ENCODE measurements at regions of chr14 and their contacts with region 1.

Region 1: GRCh38 chr14:51651388-51652167 is at the start of gene FRMD6:
- DNase-seq: peak; percentile 75 to 90 (median 83)
- ATAC-seq: peak; percentile 90
- H3K4me3 ChIP-seq: peak within 1 kb of the TSS; percentile 76
- H3K4me3 Mint-ChIP-seq: peak within 1 kb of the TSS; percentile 77 to 89 (median 84)
- H3K27ac ChIP-seq: peak within 1 kb of the TSS; percentile 78
- H3K27ac Mint-ChIP-seq: peak within 1 kb of the TSS in 8 of 9 donors; percentile 20 to 83 (median 73)
- H3K4me1 ChIP-seq: peaks cover 6 to 18% of the 10 kb centered on the region in 2 donors
- H3K4me1 Mint-ChIP-seq: peaks cover 12 to 29% (median 18%) of the 10 kb centered on the region in 7 donors
- H3K27me3 ChIP-seq: peaks cover 0 to 12% of the 10 kb centered on the region in 2 donors
- H3K27me3 Mint-ChIP-seq: peaks cover 9 to 31% (median 19%) of the 10 kb centered on the region in 5 donors
- total RNA-seq, gene FRMD6: 0.93 to 4.8 (median 3.9) TPM

Region 2: DNA sequence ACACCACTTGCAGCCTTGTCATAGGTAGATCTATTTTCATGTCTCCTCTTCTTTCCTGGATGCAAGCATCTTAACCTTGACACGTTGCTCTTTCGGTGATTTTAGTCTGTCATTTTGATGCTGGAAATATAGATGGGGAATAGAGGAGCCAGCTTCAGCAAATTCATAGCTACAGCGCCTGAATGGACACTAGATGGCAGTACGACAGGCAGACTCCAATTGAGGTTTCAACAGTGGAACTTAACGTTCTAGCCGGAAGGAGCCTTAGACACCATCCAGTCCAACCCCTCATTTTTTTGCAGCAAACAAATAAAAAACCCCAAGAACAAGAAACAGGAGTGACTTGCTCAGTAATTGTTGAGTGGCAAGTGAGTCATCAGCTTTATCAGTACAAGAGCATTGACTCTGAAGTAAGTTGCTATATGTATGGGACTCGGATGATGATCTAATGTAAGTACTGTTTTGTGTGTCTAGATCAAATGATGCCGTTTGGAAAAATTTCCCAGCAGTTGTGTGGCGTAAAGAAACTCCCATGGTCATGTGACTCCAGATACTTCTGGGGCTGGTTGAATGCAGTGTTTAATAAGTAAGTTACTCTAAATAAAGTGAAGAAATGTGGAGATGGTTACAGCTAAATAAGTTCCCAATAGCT is 1330.4 kb before region 1 on chr14:
- CTCF ChIA-PET with region 1: no interaction called
- POLR2A ChIA-PET with region 1: no interaction called
- intact Hi-C with region 1: loop called in 1 of 2 experiments (anchors 5 kb)
- DNase-seq: peak in 8 of 9 donors; percentile 52 to 83 (median 76)
- ATAC-seq: peak; percentile 99
- H3K4me3 ChIP-seq: peak overlapping the region; percentile 15
- H3K4me3 Mint-ChIP-seq: no peak overlapping the region
- H3K27ac ChIP-seq: peak overlapping the region; percentile 11
- H3K27ac Mint-ChIP-seq: no peak overlapping the region
- H3K4me1 ChIP-seq: peaks cover 0 to 4% of the 10 kb centered on the region in 2 donors
- H3K4me1 Mint-ChIP-seq: peaks cover 8 to 34% (median 27%) of the 10 kb centered on the region in 7 donors
- H3K27me3 ChIP-seq: no peaks in the 10 kb centered on the region
- H3K27me3 Mint-ChIP-seq: no peaks in the 10 kb centered on the region

Region 3: DNA sequence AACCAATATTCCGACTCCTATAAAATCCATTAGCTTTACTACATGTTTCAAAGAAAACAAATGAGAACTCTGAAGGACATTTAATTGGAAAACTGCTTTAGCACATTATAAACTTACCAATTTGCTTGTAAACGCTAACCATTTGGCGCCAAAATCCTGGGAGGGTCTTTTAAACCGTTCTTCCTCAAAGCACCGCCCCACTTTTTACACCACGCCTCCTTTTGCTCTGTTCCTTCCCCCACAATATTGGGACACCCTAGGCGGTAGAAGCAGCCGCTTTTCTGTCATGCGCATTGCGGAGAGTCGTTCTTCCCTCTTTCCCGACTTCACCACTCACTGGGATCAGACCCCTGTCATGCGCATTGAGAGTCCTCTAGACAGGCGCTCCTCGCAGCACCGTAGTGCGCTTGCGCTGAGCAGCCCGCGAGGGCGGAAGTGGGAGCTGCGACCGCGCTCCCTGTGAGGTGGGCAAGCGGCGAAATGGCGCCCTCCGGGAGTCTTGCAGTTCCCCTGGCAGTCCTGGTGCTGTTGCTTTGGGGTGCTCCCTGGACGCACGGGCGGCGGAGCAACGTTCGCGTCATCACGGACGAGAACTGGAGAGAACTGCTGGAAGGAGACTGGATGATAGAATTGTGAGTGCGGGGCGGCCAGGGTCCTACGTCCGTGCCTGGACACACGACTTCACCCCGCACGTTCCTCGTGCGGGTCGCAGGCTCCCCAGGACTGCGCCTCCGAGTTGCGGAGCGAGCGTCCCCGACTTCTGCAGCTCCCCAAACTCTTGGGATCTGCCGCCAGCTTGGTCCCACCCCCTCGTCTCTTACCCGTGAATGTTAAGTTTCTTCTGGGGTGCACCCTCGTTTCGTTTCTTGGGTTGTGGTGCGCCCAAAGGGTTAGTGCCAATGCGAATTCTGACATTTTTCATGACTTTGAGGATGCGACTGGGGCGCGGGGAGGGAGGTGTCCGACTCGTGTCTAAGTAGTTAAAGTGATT is 411.5 kb before region 1 on chr14 and contains the start of gene TMX1:
- CTCF ChIA-PET with region 1: no interaction called
- POLR2A ChIA-PET with region 1: interaction called, 3 read pairs
- intact Hi-C with region 1: loop called (anchors 1 kb)
- DNase-seq: peak; percentile 70 to 88 (median 82)
- ATAC-seq: peak; percentile 94
- H3K4me3 ChIP-seq: peak within 1 kb of the TSS; percentile 99
- H3K4me3 Mint-ChIP-seq: no peak within 1 kb of the TSS
- H3K27ac ChIP-seq: peak within 1 kb of the TSS; percentile 81
- H3K27ac Mint-ChIP-seq: no peak within 1 kb of the TSS
- H3K4me1 ChIP-seq: peaks cover 16 to 17% of the 10 kb centered on the region in 2 donors
- H3K4me1 Mint-ChIP-seq: peaks cover 0 to 29% (median 20%) of the 10 kb centered on the region in 7 donors
- H3K27me3 ChIP-seq: no peaks in the 10 kb centered on the region
- H3K27me3 Mint-ChIP-seq: no peaks in the 10 kb centered on the region
- total RNA-seq, gene TMX1: 13.3 to 48.3 (median 23.1) TPM

Region 4: GRCh38 chr14:51419685-51420084 is 231.9 kb before region 1 on chr14:
- CTCF ChIA-PET with region 1: no interaction called
- POLR2A ChIA-PET with region 1: no interaction called
- intact Hi-C with region 1: loop called in 1 of 2 experiments (anchors 5 kb)
- DNase-seq: peak in 8 of 9 donors; percentile 12 to 90 (median 82)
- ATAC-seq: peak; percentile 95
- H3K4me3 ChIP-seq: no peak overlapping the region
- H3K4me3 Mint-ChIP-seq: peak overlapping the region in 9 of 10 donors; percentile 26 to 70 (median 59)
- H3K27ac ChIP-seq: peak overlapping the region; percentile 41
- H3K27ac Mint-ChIP-seq: peak overlapping the region; percentile 80 to 97 (median 91)
- H3K4me1 ChIP-seq: peaks cover 17 to 19% of the 10 kb centered on the region in 2 donors
- H3K4me1 Mint-ChIP-seq: peaks cover 10 to 33% (median 24%) of the 10 kb centered on the region in 7 donors
- H3K27me3 ChIP-seq: no peaks in the 10 kb centered on the region
- H3K27me3 Mint-ChIP-seq: peaks cover 0 to 26% (median 22%) of the 10 kb centered on the region in 5 donors

Region 5: GRCh38 chr14:51597261-51598001 is 54.1 kb before region 1 on chr14:
- CTCF ChIA-PET with region 1: no interaction called
- POLR2A ChIA-PET with region 1: no interaction called
- intact Hi-C with region 1: no loop called
- DNase-seq: no peak
- ATAC-seq: no peak
- H3K4me3 ChIP-seq: no peak overlapping the region
- H3K4me3 Mint-ChIP-seq: no peak overlapping the region
- H3K27ac ChIP-seq: no peak overlapping the region
- H3K27ac Mint-ChIP-seq: no peak overlapping the region
- H3K4me1 ChIP-seq: peaks cover 0 to 5% of the 10 kb centered on the region in 2 donors
- H3K4me1 Mint-ChIP-seq: peaks cover 0 to 8% (median 7%) of the 10 kb centered on the region in 7 donors
- H3K27me3 ChIP-seq: no peaks in the 10 kb centered on the region
- H3K27me3 Mint-ChIP-seq: peaks cover 10 to 47% (median 20%) of the 10 kb centered on the region in 5 donors

Region 6: GRCh38 chr14:51609955-51610283 is 41.7 kb before region 1 on chr14:
- CTCF ChIA-PET with region 1: no interaction called
- POLR2A ChIA-PET with region 1: no interaction called
- intact Hi-C with region 1: no loop called
- DNase-seq: no peak
- ATAC-seq: no peak
- H3K4me3 ChIP-seq: no peak overlapping the region
- H3K4me3 Mint-ChIP-seq: no peak overlapping the region
- H3K27ac ChIP-seq: no peak overlapping the region
- H3K27ac Mint-ChIP-seq: no peak overlapping the region
- H3K4me1 ChIP-seq: no peaks in the 10 kb centered on the region
- H3K4me1 Mint-ChIP-seq: no peaks in the 10 kb centered on the region
- H3K27me3 ChIP-seq: no peaks in the 10 kb centered on the region
- H3K27me3 Mint-ChIP-seq: peaks cover 3 to 27% (median 12%) of the 10 kb centered on the region in 5 donors

Region 7: DNA sequence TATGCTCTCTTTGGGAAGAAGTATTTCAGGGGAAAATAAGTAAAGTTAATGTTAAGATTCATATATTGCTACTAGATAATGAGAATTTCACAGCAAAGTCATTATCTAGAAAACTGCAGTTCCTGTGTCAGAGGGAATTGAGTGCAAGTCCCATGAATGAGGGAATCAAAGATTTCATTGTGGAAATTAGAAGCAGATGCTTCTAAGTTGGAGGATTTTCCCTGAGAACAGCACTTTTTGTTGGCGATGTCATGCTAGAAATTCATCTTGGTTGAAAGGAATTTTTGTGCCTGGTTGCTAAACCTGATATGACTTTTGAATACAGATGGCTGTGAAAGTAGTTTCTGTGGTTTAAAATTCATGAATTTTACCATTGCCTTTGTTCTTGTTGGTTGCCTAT is 25.7 kb after region 1 on chr14:
- CTCF ChIA-PET with region 1: no interaction called
- POLR2A ChIA-PET with region 1: no interaction called
- intact Hi-C with region 1: no loop called
- DNase-seq: no peak
- ATAC-seq: no peak
- H3K4me3 ChIP-seq: no peak overlapping the region
- H3K4me3 Mint-ChIP-seq: no peak overlapping the region
- H3K27ac ChIP-seq: no peak overlapping the region
- H3K27ac Mint-ChIP-seq: no peak overlapping the region
- H3K4me1 ChIP-seq: no peaks in the 10 kb centered on the region
- H3K4me1 Mint-ChIP-seq: peaks cover 0 to 5% (median 0%) of the 10 kb centered on the region in 7 donors
- H3K27me3 ChIP-seq: no peaks in the 10 kb centered on the region
- H3K27me3 Mint-ChIP-seq: peaks cover 0 to 6% (median 4%) of the 10 kb centered on the region in 5 donors

Region 8: DNA sequence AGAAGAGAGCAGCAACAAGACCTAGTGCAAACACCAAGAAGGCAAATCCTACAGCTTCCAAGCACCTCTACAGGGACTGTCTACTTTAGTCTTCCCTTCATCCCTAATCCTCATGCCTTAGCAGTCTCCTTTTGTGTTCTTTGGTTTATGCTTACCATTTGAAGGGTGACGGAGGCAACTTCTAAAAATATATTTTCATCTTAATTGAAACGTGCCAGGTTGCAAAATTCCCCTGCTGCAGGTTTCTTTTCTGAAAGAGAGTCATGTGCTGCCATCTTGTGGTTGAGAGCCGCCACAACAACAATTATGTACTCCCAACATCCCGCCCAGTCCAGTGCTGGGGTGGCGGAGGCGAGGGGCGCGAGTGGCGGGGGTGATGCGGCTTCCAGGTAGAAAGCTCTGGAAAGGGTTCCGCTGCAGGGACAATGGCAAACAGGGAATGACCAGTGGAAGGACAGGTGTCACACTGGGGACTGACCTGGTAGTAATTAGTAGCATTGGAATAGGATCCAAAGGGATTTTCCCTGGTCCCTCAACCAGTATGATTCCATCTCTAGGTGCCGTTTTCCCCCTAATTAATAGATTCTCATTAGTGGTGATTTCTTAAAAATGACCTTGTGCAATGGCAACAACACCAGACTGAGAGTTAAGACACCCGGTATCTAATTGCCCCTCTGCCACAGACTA is 128.6 kb after region 1 on chr14:
- CTCF ChIA-PET with region 1: no interaction called
- POLR2A ChIA-PET with region 1: no interaction called
- intact Hi-C with region 1: loop called in 1 of 2 experiments (anchors 1 kb)
- DNase-seq: peak; percentile 34 to 74 (median 64)
- ATAC-seq: peak; percentile 84
- H3K4me3 ChIP-seq: no peak overlapping the region
- H3K4me3 Mint-ChIP-seq: peak overlapping the region; percentile 5 to 76 (median 53)
- H3K27ac ChIP-seq: no peak overlapping the region
- H3K27ac Mint-ChIP-seq: peak overlapping the region in 6 of 9 donors; percentile 35 to 89 (median 46)
- H3K4me1 ChIP-seq: peaks cover 5 to 15% of the 10 kb centered on the region in 2 donors
- H3K4me1 Mint-ChIP-seq: peaks cover 18 to 34% (median 26%) of the 10 kb centered on the region in 7 donors
- H3K27me3 ChIP-seq: no peaks in the 10 kb centered on the region
- H3K27me3 Mint-ChIP-seq: peaks cover 0 to 48% (median 5%) of the 10 kb centered on the region in 5 donors

Region 9: DNA sequence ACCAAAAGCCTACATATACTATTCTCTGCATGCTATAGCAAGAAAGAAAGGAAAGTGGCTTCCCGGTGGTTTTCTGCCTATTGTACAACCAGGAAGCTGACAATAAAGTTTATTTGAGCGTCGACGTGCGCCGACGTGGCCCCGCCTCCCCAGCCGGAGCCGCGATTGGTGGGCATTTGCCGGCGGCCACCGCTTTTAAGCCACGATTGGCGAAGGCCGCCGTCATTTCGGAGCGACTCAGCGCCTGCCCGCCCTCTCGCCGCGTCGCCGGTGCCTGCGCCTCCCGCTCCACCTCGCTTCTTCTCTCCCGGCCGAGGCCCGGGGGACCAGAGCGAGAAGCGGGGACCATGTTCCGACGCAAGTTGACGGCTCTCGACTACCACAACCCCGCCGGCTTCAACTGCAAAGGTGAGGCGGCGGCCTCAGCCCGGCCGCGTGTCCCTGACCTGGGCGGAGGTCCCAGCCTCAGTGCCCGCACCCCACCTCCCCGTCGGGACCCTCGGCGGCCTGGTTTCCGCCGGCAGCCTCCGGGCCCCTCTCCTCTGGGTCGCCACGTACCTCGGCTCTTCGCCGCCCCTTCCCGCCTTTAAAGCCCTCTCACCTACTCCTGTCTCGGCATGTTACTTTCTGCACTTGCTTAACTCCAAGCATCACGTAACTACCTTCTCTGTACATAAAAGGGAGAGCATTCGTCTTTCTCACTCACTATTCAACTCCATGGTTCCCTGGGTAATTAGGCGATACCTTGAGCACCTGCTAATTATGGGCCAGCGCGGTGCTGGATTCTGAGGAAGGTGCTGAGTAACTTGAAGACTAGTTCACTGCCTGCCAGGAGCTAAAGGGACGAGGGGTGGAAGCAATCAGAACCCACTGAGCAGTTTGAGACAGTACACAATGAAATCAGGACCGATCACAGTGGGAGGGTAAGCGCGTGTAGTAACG is 338.0 kb after region 1 on chr14 and contains the start of gene RTRAF:
- CTCF ChIA-PET with region 1: no interaction called
- POLR2A ChIA-PET with region 1: no interaction called
- intact Hi-C with region 1: loop called (anchors 1 to 2 kb)
- DNase-seq: peak; percentile 86 to 93 (median 91)
- ATAC-seq: peak; percentile 98
- H3K4me3 ChIP-seq: peak within 1 kb of the TSS; percentile 60
- H3K4me3 Mint-ChIP-seq: peak within 1 kb of the TSS; percentile 93 to 97 (median 95)
- H3K27ac ChIP-seq: peak within 1 kb of the TSS; percentile 88
- H3K27ac Mint-ChIP-seq: peak within 1 kb of the TSS; percentile 91 to 99 (median 95)
- H3K4me1 ChIP-seq: peaks cover 19 to 22% of the 10 kb centered on the region in 2 donors
- H3K4me1 Mint-ChIP-seq: peaks cover 20 to 57% (median 50%) of the 10 kb centered on the region in 7 donors
- H3K27me3 ChIP-seq: no peaks in the 10 kb centered on the region
- H3K27me3 Mint-ChIP-seq: peaks cover 0 to 4% (median 0%) of the 10 kb centered on the region in 5 donors
- total RNA-seq, gene RTRAF: 112 to 180 (median 116) TPM

Region 10: DNA sequence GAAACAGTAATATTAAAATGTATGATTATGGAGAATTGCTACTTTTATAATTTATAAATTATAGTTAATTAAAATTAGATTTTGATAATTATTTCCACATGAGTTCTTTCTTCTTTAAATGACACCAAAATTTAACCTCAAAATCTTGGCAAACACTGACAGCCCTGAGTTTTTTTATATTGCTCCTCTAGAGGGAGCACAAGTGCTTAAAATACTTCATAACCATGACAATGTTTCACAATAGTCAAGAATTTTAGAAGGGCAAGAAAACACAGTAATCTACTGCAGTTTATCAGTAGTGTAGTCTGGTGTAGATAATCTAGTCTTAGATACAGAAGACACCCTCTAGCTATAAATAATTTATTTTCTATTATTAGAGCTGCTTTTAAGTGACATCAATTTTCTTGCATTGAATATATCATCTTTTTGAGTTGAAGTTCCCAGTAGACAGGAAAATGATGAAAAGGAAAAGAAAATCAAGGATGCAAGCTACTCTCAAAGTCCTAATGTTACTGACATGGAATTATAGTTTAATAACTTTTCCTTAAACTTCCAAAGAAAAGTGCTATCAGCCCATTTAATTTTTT is 648.2 kb after region 1 on chr14:
- CTCF ChIA-PET with region 1: no interaction called
- POLR2A ChIA-PET with region 1: no interaction called
- intact Hi-C with region 1: no loop called
- DNase-seq: peak in 6 of 9 donors; percentile 28 to 68 (median 51)
- ATAC-seq: peak; percentile 84
- H3K4me3 ChIP-seq: no peak overlapping the region
- H3K4me3 Mint-ChIP-seq: peak overlapping the region in 1 of 10 donors; percentile 23
- H3K27ac ChIP-seq: no peak overlapping the region
- H3K27ac Mint-ChIP-seq: no peak overlapping the region
- H3K4me1 ChIP-seq: peaks cover 3 to 5% of the 10 kb centered on the region in 2 donors
- H3K4me1 Mint-ChIP-seq: peaks cover 8 to 63% (median 25%) of the 10 kb centered on the region in 7 donors
- H3K27me3 ChIP-seq: no peaks in the 10 kb centered on the region
- H3K27me3 Mint-ChIP-seq: peaks cover 0 to 9% (median 0%) of the 10 kb centered on the region in 5 donors

Region 11: DNA sequence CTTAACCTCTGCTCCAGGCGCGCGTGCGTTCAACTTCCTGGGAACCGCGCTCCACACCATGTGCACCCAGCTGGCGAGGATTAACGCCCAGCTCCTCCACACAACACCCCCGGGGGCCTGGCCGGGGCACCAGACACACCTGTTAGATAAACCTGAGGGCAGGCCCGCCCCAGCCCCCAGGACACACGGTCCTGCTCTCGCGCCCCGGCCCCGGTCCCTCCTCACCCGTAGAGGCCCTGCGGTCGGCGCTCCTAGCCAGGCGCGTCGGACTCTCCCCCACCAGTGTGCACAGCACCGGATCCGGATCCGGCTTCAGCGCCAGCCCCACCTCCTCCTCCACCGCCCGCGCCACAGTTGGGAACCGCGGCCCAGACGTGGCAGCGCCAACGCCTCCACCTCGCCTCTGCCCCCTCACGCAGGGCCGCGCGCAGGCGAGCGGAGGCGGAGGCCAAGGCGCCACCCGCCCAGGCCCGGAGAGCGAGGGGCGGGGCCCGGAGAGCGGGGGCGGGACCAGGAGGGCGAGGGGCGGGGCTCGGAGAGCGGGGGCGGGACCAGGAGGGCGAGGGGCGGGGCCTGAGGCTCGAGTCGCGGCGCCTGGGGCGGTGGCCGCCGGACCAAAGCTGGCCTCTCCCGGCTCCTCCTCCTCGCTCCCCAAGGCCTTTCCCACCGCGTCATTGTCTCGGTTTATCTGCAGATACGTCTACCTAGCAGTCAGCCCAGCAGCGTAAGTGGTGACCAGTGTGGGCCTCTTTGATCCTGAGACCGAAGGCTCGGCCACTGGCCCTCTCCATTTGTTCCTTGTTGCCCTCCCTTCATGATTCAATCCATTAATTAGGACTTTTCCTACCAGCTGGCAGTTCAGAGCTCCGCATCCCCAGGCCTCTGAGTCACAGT is 1139.9 kb after region 1 on chr14 and contains the start of gene GNPNAT1:
- CTCF ChIA-PET with region 1: no interaction called
- POLR2A ChIA-PET with region 1: interaction called, 5 read pairs
- intact Hi-C with region 1: loop called (anchors 5 to 10 kb)
- DNase-seq: peak; percentile 85 to 92 (median 89)
- ATAC-seq: peak; percentile 98
- H3K4me3 ChIP-seq: peak within 1 kb of the TSS; percentile 87
- H3K4me3 Mint-ChIP-seq: peak within 1 kb of the TSS; percentile 86 to 94 (median 93)
- H3K27ac ChIP-seq: peak within 1 kb of the TSS; percentile 74
- H3K27ac Mint-ChIP-seq: peak within 1 kb of the TSS; percentile 75 to 96 (median 89)
- H3K4me1 ChIP-seq: peaks cover 15 to 18% of the 10 kb centered on the region in 2 donors
- H3K4me1 Mint-ChIP-seq: peaks cover 23 to 48% (median 44%) of the 10 kb centered on the region in 7 donors
- H3K27me3 ChIP-seq: no peaks in the 10 kb centered on the region
- H3K27me3 Mint-ChIP-seq: no peaks in the 10 kb centered on the region
- total RNA-seq, gene GNPNAT1: 4.6 to 14.7 (median 8.5) TPM

Measured in naive thymus-derived CD4-positive, alpha-beta T cell (primary cell).